ENCODE measurements at regions of chr17 and their contacts with region 1.

Region 1: DNA sequence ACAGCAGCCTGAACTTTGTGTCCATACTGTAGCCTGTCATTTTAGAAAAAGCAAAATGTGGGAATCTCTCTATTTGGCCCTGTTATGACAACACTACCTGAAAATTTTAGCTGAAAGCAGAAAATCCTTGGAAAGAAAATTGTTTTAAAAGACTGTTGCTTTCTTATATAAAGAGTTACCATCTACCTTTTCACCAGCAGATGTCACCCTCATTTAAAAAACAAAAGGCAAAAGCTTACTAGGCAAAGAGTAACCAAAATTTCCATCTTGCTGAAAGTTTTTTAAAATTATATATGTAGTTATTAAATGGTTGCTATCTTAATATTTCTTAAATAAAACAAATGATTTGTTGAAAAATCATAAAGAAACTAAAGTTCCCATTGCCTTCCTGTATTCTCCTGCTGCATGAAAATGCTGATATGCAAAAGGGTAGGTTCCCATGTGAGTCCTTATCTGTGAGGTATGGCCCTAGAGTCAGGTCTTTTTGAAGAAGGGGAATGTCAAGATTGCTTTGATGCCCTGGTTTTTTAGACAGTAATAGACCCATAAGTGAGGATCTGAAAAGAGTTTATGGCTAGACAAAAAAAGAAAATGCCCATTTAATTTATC is 61.0 kb downstream of the TNRC6C start:
- DNase-seq: no peak
- H3K4me3 Mint-ChIP-seq: peak overlapping the region; percentile 57
- H3K27ac Mint-ChIP-seq: peak overlapping the region; percentile 83
- H3K4me1 Mint-ChIP-seq: peaks cover 26% of the 10 kb centered on the region
- H3K27me3 Mint-ChIP-seq: no peaks in the 10 kb centered on the region

Region 2: DNA sequence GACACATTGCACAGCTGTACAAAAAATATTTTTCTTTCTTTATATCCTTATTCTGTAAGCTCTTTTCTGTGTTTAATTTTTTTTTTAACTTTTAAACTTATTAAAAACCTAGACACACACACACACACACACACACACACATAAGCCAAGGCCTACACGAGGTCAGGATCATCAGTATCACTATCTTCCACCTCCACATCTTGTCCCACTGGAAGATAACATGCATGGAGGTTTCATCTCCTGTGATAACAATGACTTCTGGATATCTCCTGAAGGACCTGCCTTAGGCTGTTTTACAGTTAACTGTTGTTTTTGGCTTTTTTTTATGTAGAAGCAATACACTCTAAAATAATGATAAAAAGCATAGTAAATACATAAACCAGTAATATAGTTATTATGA is 10.2 kb after region 1 on chr17:
- CTCF ChIA-PET with region 1: interaction called, 16 read pairs
- POLR2A ChIA-PET with region 1: no interaction called
- DNase-seq: no peak
- H3K4me3 Mint-ChIP-seq: no peak overlapping the region
- H3K27ac Mint-ChIP-seq: no peak overlapping the region
- H3K4me1 Mint-ChIP-seq: peaks cover 15% of the 10 kb centered on the region
- H3K27me3 Mint-ChIP-seq: no peaks in the 10 kb centered on the region

Region 3: GRCh38 chr17:78040440-78041385 is 21.2 kb after region 1 on chr17:
- CTCF ChIA-PET with region 1: interaction called, 17 read pairs
- POLR2A ChIA-PET with region 1: no interaction called
- DNase-seq: peak; percentile 48
- H3K4me3 Mint-ChIP-seq: peak overlapping the region; percentile 61
- H3K27ac Mint-ChIP-seq: no peak overlapping the region
- H3K4me1 Mint-ChIP-seq: peaks cover 7% of the 10 kb centered on the region
- H3K27me3 Mint-ChIP-seq: no peaks in the 10 kb centered on the region